AG04450 (cell line): ENCODE measurements at regions of chr15 and their contacts with region 1.

Region 1: DNA sequence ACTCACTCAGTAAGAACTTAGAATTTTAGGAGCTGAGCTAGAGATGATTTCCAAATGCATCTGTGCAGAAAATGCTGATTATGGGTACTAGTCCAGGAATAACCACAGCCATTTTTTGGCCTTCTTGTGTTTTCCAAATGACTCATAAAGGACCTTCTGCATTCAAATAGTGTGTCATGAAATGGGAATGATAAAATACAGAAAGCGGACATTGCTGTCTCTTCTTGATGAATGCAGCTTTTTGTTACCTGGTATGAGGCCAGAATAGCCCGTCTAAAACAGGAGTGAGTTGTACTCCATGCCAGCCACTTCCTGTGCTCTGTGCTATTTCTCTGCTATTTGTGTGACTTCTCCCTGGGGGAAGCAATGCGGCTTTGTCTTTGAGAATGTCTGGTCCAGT is 20.5 kb upstream of the FRMD5 start:
- DNase-seq: peak; percentile 45
- H3K4me3 ChIP-seq: no peak overlapping the region
- H3K27ac ChIP-seq: no peak overlapping the region
- H3K27me3 ChIP-seq: no peaks in the 10 kb centered on the region
- CTCF ChIP-seq: no peak

Region 2: DNA sequence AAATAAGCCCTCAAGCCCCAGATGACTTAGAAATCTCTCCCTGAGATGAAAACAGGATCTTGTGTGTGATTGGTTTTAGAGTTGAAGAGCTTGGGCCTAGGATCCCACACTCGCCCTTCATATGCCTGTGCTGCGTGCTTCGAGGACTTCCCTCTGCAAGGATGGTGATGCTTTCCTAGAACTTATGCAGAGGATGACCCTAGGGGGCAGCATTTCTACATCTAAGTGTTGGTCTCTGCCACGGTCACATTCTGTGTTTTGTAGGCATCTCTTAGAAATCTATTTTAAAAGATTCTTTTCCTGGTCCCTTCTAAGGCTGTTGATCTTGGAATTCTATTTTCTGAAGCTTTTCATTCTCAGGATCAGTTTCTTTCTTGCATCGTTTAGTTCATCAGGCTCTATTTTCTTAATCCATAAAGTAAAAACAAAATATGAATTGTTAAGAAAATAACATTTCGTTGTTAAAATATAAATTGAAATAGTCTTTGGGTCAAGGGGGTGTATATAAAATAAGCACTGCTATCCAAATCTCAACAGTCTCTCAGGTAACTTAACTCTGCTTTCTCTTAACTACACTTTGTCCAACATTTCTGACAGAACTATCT is 343.1 kb before region 1 on chr15:
- CTCF ChIA-PET with region 1: interaction called, 16 read pairs
- POLR2A ChIA-PET with region 1: no interaction called
- DNase-seq: peak; percentile 51
- H3K4me3 ChIP-seq: no peak overlapping the region
- H3K27ac ChIP-seq: no peak overlapping the region
- H3K27me3 ChIP-seq: no peaks in the 10 kb centered on the region
- CTCF ChIP-seq: peak; percentile 80

Region 3: DNA sequence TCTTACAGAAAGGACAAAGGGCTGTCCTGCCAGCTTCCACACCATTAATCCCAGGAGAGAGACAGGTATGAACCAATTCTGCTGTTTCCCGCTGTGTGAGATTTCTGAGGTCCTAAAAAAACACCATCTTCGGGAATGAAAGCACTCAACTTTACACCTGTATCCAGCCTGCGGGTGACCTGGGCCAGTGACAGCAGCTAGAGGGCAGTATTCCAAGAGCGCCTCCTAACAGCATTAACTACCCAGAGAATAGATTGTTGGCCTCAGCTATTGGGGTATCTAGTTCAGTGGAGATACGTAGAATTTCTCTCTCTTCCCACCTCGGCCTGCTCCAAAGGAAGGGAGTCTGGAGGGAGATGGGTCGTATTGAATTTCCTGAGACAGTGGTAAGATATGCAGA is 333.6 kb before region 1 on chr15:
- CTCF ChIA-PET with region 1: interaction called, 16 read pairs
- POLR2A ChIA-PET with region 1: no interaction called
- DNase-seq: no peak
- H3K4me3 ChIP-seq: no peak overlapping the region
- H3K27ac ChIP-seq: no peak overlapping the region
- H3K27me3 ChIP-seq: no peaks in the 10 kb centered on the region
- CTCF ChIP-seq: peak; percentile 49

Region 4: GRCh38 chr15:43903864-43904290 is 311.7 kb before region 1 on chr15:
- CTCF ChIA-PET with region 1: interaction called, 72 read pairs
- POLR2A ChIA-PET with region 1: no interaction called
- DNase-seq: peak; percentile 26
- H3K4me3 ChIP-seq: no peak overlapping the region
- H3K27ac ChIP-seq: no peak overlapping the region
- H3K27me3 ChIP-seq: no peaks in the 10 kb centered on the region
- CTCF ChIP-seq: peak; percentile 89

Region 5: DNA sequence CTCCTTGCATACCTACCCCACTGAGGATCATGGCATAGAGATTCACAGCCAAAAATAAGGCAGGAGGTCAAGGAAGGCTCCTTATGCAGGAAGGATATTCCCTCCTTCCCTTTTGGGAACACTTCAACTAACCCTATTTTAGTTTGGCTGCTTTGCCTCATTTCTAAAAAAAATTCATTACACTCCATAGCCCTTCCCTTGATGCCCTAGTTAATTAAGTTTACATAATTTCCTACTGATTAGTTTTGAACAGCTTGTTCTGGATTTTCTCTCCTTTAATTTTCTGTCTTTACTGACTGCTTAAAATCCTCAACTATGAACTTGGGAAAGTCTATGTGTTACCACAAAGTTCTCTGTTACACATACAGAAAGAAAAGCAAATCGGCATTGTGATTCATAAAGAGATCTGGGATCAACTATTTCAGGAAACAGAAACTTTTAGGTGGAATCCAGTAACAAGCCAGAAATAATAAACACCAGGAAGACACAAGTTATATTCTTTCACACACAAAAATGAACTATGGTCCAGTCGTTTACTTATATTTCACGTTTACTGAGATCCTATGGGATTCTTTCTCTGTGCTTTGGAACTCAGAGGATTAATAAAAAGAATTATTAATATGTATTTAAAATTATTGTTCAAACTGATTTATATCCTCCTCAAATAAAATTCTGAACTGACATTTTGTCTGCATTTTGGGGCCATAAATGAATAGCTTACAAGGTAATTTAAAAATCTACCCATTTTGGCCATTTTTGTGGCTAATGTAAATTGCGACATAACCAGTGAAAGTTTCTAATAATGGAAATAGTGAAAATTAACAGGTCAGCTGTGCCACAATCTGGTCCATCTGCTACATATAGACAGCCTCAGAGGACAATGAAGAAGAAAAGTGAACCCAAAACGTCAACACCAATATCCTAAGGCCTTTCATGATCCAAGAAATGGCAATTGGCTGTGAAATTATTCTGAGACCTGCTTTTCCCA is 134.3 kb before region 1 on chr15:
- CTCF ChIA-PET with region 1: no interaction called
- POLR2A ChIA-PET with region 1: no interaction called
- DNase-seq: peak; percentile 56
- H3K4me3 ChIP-seq: no peak overlapping the region
- H3K27ac ChIP-seq: no peak overlapping the region
- H3K27me3 ChIP-seq: no peaks in the 10 kb centered on the region
- CTCF ChIP-seq: no peak

Region 6: DNA sequence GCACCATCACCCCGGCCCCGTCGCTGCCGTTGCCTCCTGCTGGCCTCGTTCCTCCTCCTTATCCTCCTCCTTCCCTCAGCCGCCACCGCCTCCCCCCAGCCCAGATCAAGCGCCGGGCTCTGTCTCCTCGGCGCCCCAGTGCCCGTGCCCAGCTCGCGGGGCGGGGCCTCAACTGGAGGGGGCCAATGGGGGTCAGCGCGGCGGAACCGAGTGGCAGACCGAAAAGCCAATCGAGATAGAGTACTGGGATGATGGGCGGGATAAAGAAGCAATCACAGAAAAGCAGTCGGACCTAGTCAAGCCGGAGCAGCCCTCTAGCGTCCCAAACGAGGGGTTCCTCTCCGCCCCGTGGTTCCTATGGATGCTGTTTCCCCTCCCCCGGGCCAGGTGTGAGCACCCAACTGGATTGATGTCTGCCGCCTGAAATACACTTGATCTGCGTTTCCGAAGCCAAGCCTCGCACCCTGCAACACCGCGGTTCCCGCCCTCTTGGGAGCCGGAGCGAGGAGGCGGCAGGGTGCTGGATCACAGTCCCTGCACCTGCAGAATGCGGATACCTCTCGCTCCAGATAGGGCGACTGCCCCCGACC is 20.3 kb before region 1 on chr15 and contains the start of gene FRMD5:
- CTCF ChIA-PET with region 1: interaction called, 5 read pairs
- POLR2A ChIA-PET with region 1: interaction called, 11 read pairs
- DNase-seq: peak; percentile 92
- H3K4me3 ChIP-seq: peak within 1 kb of the TSS; percentile 76
- H3K27ac ChIP-seq: peak within 1 kb of the TSS; percentile 61
- H3K27me3 ChIP-seq: no peaks in the 10 kb centered on the region
- CTCF ChIP-seq: peak; percentile 70
- polyA plus RNA-seq, gene FRMD5: 5.2 and 5.4 TPM in 2 replicates

Region 7: GRCh38 chr15:44286814-44287452 is 71.3 kb after region 1 on chr15:
- CTCF ChIA-PET with region 1: interaction called, 10 read pairs
- POLR2A ChIA-PET with region 1: no interaction called
- DNase-seq: no peak
- H3K4me3 ChIP-seq: peak overlapping the region; percentile 87
- H3K27ac ChIP-seq: no peak overlapping the region
- H3K27me3 ChIP-seq: no peaks in the 10 kb centered on the region
- CTCF ChIP-seq: peak; percentile 29

Region 8: GRCh38 chr15:44366971-44367370 is 151.4 kb after region 1 on chr15:
- CTCF ChIA-PET with region 1: no interaction called
- POLR2A ChIA-PET with region 1: no interaction called
- DNase-seq: no peak
- H3K4me3 ChIP-seq: no peak overlapping the region
- H3K27ac ChIP-seq: no peak overlapping the region
- H3K27me3 ChIP-seq: no peaks in the 10 kb centered on the region
- CTCF ChIP-seq: no peak